CD4-positive, alpha-beta memory T cell (primary cell): ENCODE measurements at regions of chr5 and their contacts with region 1.

Region 1: DNA sequence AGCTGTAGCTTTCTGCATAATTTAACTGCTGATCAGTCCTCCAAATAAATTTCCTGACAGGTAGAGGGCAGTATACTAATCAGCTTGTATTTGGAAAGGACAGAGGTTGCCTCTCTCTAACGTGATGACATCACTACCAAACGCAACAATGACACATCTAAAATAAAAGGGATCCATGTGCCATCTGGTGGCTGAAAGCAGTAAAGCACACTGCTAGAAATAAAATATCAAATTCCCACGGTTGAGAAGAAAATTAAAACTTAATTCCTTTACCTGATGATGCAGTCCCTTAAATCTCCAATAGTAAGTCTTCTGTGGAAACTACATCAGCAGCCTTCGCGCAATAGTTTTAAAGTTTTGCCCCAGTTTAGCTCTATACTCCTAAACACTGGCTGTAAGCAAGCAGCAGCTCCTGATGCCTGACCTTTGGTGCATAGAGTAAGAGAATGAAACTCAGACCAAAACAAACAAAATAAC is 54.5 kb downstream of the DIAPH1 start:
- DNase-seq: peak; percentile 85 to 89 (median 88)
- H3K4me3 ChIP-seq: no peak overlapping the region
- H3K4me3 Mint-ChIP-seq: peak overlapping the region in 1 of 8 donors; percentile 26
- H3K27ac ChIP-seq: peak overlapping the region; percentile 59
- H3K27ac Mint-ChIP-seq: peak overlapping the region; percentile 74 to 93 (median 85)
- H3K4me1 ChIP-seq: peaks cover 17% of the 10 kb centered on the region
- H3K4me1 Mint-ChIP-seq: peaks cover 22 to 48% (median 28%) of the 10 kb centered on the region in 4 donors
- H3K27me3 ChIP-seq: no peaks in the 10 kb centered on the region
- H3K27me3 Mint-ChIP-seq: no peaks in the 10 kb centered on the region

Region 2: DNA sequence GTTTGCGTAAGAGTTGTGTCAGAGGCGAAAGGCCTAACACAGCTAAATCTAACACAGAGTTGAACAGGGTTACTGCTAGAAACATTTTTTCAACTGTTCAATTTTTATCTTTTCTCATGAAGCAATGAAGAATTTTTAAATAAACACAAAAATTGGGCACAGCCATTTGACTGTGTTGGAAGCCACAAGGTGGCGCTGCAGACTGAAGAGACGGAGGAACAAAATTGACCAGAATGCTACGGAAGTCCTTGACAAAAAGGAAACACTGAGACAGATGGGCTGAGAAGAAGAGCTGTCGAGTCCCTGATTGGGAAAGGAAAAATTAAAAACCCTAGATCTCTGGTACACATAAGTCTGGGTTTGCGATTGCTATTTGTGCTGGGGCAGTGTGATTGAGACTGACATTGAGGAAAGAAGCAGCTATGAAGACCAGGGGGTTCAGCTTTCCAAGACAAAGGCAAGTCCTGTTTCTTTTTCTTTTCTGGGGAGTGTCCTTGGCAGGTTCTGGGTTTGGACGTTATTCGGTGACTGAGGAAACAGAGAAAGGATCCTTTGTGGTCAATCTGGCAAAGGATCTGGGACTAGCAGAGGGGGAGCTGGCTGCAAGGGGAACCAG is 377.2 kb before region 1 on chr5 and contains the start of gene PCDHB9:
- CTCF ChIA-PET with region 1: no interaction called
- POLR2A ChIA-PET with region 1: no interaction called
- intact Hi-C with region 1: loop called (anchors 5 kb)
- DNase-seq: peak; percentile 15 to 57 (median 22)
- H3K4me3 ChIP-seq: no peak within 1 kb of the TSS
- H3K4me3 Mint-ChIP-seq: peak within 1 kb of the TSS; percentile 5 to 75 (median 48)
- H3K27ac ChIP-seq: no peak within 1 kb of the TSS
- H3K27ac Mint-ChIP-seq: no peak within 1 kb of the TSS
- H3K4me1 ChIP-seq: no peaks in the 10 kb centered on the region
- H3K4me1 Mint-ChIP-seq: peaks cover 0 to 21% (median 5%) of the 10 kb centered on the region in 4 donors
- H3K27me3 ChIP-seq: no peaks in the 10 kb centered on the region
- H3K27me3 Mint-ChIP-seq: peaks cover 32 to 37% of the 10 kb centered on the region in 2 donors
- total RNA-seq, gene PCDHB9: 0.44 TPM

Region 3: DNA sequence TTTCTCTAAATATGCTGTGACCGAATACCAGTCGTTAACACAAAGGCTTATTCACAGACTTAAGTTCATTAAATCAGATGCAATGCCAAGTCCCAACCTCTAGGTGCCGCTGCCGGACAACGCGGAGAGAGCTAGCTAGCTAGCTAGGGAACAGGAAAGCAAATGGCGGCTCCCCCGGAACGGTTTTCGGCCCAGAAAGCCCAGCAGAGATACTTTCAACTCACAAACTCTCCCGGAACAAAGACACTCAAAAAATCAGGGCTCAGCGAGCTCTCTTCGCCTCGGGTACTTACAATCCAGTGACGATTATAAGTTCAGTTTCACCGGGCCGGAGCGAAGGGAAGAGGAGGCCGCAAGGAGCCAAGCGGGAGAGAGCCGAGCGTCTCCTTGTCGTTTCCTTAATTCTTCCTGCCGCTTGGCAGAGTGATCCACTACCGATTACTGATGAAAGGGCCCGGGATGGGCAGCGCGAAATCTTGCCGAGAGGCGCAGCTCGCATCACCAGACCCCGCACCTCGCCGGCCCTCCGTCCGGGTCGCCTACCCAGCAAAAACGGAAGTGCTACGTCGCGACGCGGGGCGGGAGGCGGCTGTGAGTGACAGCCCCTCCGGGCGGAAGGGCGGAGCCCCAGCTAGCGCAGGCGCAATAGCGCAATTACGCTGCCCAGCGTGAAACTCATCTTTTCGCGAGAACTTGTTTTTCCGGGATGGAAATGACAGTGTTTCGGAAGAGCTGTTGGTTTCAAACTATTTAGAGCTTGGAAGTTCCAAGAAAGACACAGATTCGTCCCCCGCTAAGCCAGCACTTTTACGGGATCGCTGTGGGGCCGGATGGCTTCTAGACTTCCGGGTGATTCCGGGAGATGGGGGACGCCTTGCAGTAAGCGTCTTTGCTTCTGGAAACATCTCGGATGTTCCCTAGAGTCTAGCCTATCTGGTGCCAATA is 243.8 kb before region 1 on chr5 and contains the start of gene TAF7:
- CTCF ChIA-PET with region 1: interaction called, 38 read pairs
- POLR2A ChIA-PET with region 1: interaction called, 27 read pairs
- intact Hi-C with region 1: loop called (anchors 1 kb)
- DNase-seq: peak; percentile 92 to 93 (median 93)
- H3K4me3 ChIP-seq: peak within 1 kb of the TSS; percentile 54 to 77
- H3K4me3 Mint-ChIP-seq: peak within 1 kb of the TSS; percentile 90 to 99 (median 98)
- H3K27ac ChIP-seq: peak within 1 kb of the TSS; percentile 97
- H3K27ac Mint-ChIP-seq: peak within 1 kb of the TSS; percentile 93 to 100 (median 97)
- H3K4me1 ChIP-seq: peaks cover 15% of the 10 kb centered on the region
- H3K4me1 Mint-ChIP-seq: peaks cover 20 to 32% (median 26%) of the 10 kb centered on the region in 4 donors
- H3K27me3 ChIP-seq: no peaks in the 10 kb centered on the region
- H3K27me3 Mint-ChIP-seq: peaks cover 0 to 2% of the 10 kb centered on the region in 2 donors
- total RNA-seq, gene TAF7: 109 to 119 TPM

Region 4: GRCh38 chr5:141412854-141413539 is 151.3 kb before region 1 on chr5 and contains the start of gene PCDHGA10:
- CTCF ChIA-PET with region 1: interaction called, 24 read pairs
- POLR2A ChIA-PET with region 1: interaction called, 11 read pairs
- intact Hi-C with region 1: loop called (anchors 1 kb)
- DNase-seq: peak; percentile 53 to 61 (median 59)
- H3K4me3 ChIP-seq: peak within 1 kb of the TSS; percentile 14 to 51
- H3K4me3 Mint-ChIP-seq: peak within 1 kb of the TSS; percentile 81 to 92 (median 89)
- H3K27ac ChIP-seq: no peak within 1 kb of the TSS
- H3K27ac Mint-ChIP-seq: peak within 1 kb of the TSS in 5 of 7 donors; percentile 30 to 87 (median 69)
- H3K4me1 ChIP-seq: peaks cover 8% of the 10 kb centered on the region
- H3K4me1 Mint-ChIP-seq: peaks cover 11 to 20% (median 15%) of the 10 kb centered on the region in 4 donors
- H3K27me3 ChIP-seq: peaks cover 22% of the 10 kb centered on the region
- H3K27me3 Mint-ChIP-seq: peaks cover 36 to 56% of the 10 kb centered on the region in 2 donors
- total RNA-seq, gene PCDHGA10: 0.25 to 0.35 TPM

Region 5: DNA sequence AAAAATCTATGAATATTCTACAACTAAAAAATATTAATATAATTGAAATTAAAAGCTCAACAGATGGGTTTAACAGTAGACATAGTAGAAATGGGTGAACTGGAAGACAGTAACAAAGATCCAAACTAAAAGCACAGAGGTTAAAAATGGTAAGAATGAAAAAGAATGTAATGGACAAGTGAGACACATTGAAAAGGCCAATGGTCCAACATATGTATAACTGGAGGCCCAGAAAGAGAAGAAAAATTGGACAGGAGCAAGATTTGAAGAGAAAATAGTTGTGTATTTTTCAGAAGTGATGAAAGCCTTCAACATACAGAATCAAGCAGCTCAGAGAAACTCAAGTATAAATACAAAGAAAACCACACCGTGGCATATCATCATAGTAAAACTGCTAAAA is 16.8 kb before region 1 on chr5:
- CTCF ChIA-PET with region 1: interaction called, 14 read pairs
- POLR2A ChIA-PET with region 1: no interaction called
- intact Hi-C with region 1: no loop called
- DNase-seq: no peak
- H3K4me3 ChIP-seq: no peak overlapping the region
- H3K4me3 Mint-ChIP-seq: peak overlapping the region in 1 of 8 donors; percentile 64
- H3K27ac ChIP-seq: no peak overlapping the region
- H3K27ac Mint-ChIP-seq: no peak overlapping the region
- H3K4me1 ChIP-seq: peaks cover 17% of the 10 kb centered on the region
- H3K4me1 Mint-ChIP-seq: peaks cover 27 to 51% (median 38%) of the 10 kb centered on the region in 4 donors
- H3K27me3 ChIP-seq: no peaks in the 10 kb centered on the region
- H3K27me3 Mint-ChIP-seq: no peaks in the 10 kb centered on the region

Region 6: DNA sequence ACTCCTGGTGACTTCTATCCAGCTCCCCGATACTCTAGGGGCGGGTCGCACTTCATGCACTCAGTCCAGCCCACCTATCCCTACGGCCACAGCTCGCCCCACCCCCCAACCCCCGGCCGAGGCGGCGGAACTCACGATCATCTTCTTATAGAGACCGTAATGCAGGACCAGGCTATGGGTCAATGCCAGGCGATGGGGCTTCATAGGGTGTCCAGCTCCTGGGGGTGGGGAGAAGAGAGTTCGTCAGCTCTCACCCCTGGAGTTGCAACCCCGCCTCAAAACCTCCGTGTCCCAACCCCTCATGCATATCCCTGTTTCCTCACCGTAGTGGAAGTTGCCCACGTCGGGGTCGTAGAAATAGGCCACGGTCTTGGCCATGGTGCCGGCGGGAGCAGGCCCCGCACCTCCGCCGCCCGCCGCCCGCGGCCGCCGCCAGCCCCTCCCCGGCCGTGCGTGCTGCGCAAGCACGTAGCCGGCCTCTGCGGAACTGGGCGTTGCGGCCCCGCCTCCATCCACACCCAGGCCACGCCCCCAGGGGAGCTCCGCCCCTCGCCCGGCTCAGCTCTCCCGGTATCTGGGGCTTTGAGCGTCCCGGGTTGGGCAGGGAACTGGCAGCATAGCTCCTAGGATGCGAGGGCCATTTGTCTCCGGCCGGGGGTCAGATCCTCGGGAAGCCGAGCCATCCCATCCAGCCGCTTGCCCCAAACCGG is 72.3 kb after region 1 on chr5 and contains the starts of genes HDAC3 and RELL2:
- CTCF ChIA-PET with region 1: interaction called, 19 read pairs
- POLR2A ChIA-PET with region 1: interaction called, 7 read pairs
- intact Hi-C with region 1: no loop called
- DNase-seq: peak; percentile 89 to 95 (median 93)
- H3K4me3 ChIP-seq: peak within 1 kb of the TSS; percentile 86 to 98
- H3K4me3 Mint-ChIP-seq: peak within 1 kb of the TSS; percentile 88 to 96 (median 94)
- H3K27ac ChIP-seq: peak within 1 kb of the TSS; percentile 87
- H3K27ac Mint-ChIP-seq: peak within 1 kb of the TSS; percentile 90 to 98 (median 96)
- H3K4me1 ChIP-seq: peaks cover 50% of the 10 kb centered on the region
- H3K4me1 Mint-ChIP-seq: peaks cover 31 to 51% (median 39%) of the 10 kb centered on the region in 4 donors
- H3K27me3 ChIP-seq: no peaks in the 10 kb centered on the region
- H3K27me3 Mint-ChIP-seq: no peaks in the 10 kb centered on the region
- total RNA-seq, gene HDAC3: 85.1 to 91.0 TPM
- total RNA-seq, gene RELL2: 20.4 to 21.3 TPM